Aorta (tissue), 5 donors: ENCODE measurements at regions of chr15 and their contacts with region 1.

Region 1: DNA sequence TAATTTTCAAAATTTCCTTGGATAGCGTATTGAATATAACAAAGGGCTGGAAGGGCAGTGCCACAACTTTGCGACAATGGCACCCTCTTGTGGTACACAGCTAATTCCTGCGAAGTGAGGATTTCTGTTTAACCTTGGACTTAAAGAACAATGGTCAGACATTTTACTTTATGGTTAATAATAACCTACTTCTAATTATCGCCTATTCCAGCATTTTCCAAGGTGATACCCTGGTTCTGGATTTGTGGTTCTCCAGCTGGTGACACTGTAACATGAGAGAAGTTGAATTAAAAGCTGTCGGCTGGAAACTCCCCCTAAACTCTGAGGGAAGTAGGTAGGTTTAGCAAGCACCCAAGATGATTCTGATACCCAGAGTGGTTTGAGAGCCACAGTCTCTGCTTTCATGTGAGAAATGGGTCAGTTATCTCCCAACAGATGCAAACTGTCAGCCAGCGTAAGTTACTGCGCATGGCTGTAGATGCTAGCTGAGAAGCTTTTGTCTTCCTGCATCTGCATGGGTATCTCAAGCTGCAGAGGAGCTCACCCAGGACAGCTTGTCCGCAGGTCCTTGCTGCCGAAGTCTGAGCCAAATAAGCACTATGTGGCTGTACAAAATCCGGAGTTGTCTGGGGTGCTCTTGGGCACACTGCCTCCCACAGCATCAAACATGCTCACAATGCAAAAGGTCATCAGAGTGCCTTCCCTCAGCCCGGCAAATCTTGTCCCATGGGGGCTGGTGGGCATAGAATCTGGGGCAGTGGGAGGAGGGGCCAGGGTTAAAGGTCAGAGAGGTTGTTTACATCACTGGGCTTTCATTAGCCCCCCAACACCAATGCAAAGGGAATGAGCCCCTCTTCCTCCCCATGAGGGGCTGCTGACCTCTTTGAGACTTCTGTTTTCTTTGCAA is 6.6 kb upstream of the CHSY1 start:
- DNase-seq: peak; percentile 72 to 79
- ATAC-seq: peak; percentile 88
- H3K4me3 ChIP-seq: no peak overlapping the region
- H3K27ac ChIP-seq: no peak overlapping the region
- H3K4me1 ChIP-seq: no peaks in the 10 kb centered on the region
- H3K27me3 ChIP-seq: no peaks in the 10 kb centered on the region

Region 2: GRCh38 chr15:100958326-100959065 is 300.0 kb before region 1 on chr15:
- intact Hi-C with region 1: no loop called
- DNase-seq: no peak
- ATAC-seq: no peak
- H3K4me3 ChIP-seq: no peak overlapping the region
- H3K27ac ChIP-seq: no peak overlapping the region
- H3K4me1 ChIP-seq: no peaks in the 10 kb centered on the region
- H3K27me3 ChIP-seq: no peaks in the 10 kb centered on the region

Region 3: GRCh38 chr15:101088788-101089583 is 169.5 kb before region 1 on chr15:
- intact Hi-C with region 1: loop called (anchors 1 to 2 kb)
- DNase-seq: peak; percentile 86 to 95
- ATAC-seq: peak; percentile 90
- H3K4me3 ChIP-seq: no peak overlapping the region
- H3K27ac ChIP-seq: no peak overlapping the region
- H3K4me1 ChIP-seq: no peaks in the 10 kb centered on the region
- H3K27me3 ChIP-seq: no peaks in the 10 kb centered on the region